Activated naive CD4-positive, alpha-beta T cell treated with anti-CD3 and anti-CD28 coated beads for 36 hours (primary cell): ENCODE measurements at regions of chr5 and their contacts with region 1.

Region 1: GRCh38 chr5:39148983-39149534 is 70.3 kb downstream of the FYB1 start:
- DNase-seq: no peak
- H3K4me3 Mint-ChIP-seq: no peak overlapping the region
- H3K27ac Mint-ChIP-seq: peak overlapping the region; percentile 65
- H3K4me1 Mint-ChIP-seq: peaks cover 78% of the 10 kb centered on the region
- H3K27me3 Mint-ChIP-seq: no peaks in the 10 kb centered on the region

Region 2: DNA sequence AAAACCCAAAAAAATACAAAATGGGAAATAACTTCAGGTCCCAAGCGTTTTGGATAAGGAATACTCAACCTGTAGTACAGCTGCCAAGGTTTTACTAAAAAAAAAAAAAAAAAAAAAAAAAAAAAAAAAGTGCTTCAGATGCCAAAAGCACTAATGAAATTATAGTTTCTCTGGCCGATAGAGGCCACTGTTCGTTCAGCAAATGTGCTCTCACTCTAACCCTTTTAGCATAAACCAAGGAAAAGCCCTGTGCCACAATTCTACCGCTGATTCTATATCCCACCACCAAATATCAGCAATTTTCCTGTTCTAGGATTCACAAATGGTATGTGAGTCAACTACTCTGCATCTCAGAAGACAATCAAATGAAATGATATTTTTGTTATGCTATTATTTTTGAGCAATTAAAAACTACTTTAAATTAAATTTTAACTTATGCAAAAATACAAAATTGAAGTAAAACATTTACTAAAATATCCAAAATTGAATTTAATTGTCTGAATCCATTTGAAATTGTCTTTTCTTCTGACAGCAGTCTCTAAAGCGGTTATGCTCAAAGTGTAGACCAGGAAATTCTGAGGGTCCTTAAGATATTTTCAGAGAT is 154.6 kb before region 1 on chr5:
- CTCF ChIA-PET with region 1: no interaction called
- intact Hi-C with region 1: loop called (anchors 1 kb)
- DNase-seq: peak; percentile 55
- H3K4me3 Mint-ChIP-seq: no peak overlapping the region
- H3K27ac Mint-ChIP-seq: no peak overlapping the region
- H3K4me1 Mint-ChIP-seq: peaks cover 14% of the 10 kb centered on the region
- H3K27me3 Mint-ChIP-seq: no peaks in the 10 kb centered on the region

Region 3: GRCh38 chr5:39131210-39132127 is 17.6 kb before region 1 on chr5:
- CTCF ChIA-PET with region 1: no interaction called
- intact Hi-C with region 1: no loop called
- DNase-seq: no peak
- H3K4me3 Mint-ChIP-seq: no peak overlapping the region
- H3K27ac Mint-ChIP-seq: peak overlapping the region; percentile 62
- H3K4me1 Mint-ChIP-seq: peaks cover 43% of the 10 kb centered on the region
- H3K27me3 Mint-ChIP-seq: no peaks in the 10 kb centered on the region

Region 4: DNA sequence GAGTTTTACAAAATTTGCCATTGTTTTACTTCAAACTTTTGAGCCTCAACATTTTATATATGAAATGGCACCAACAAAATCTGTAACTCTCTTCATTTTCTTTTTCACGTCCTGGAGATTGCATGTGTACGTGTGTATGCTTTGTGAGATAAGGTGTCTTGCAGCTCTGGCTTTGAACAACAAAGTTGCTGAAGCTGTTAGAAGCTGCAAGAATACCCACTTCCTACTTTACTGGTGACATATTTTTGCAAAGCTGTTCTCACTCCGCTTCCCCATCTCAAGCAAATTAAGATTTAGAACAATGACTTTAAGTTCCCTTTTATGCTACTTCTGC is 28.5 kb after region 1 on chr5:
- CTCF ChIA-PET with region 1: interaction called, 6 read pairs
- intact Hi-C with region 1: loop called (anchors 1 kb)
- DNase-seq: no peak
- H3K4me3 Mint-ChIP-seq: peak overlapping the region; percentile 75
- H3K27ac Mint-ChIP-seq: peak overlapping the region; percentile 92
- H3K4me1 Mint-ChIP-seq: peaks cover 95% of the 10 kb centered on the region
- H3K27me3 Mint-ChIP-seq: no peaks in the 10 kb centered on the region

Region 5: DNA sequence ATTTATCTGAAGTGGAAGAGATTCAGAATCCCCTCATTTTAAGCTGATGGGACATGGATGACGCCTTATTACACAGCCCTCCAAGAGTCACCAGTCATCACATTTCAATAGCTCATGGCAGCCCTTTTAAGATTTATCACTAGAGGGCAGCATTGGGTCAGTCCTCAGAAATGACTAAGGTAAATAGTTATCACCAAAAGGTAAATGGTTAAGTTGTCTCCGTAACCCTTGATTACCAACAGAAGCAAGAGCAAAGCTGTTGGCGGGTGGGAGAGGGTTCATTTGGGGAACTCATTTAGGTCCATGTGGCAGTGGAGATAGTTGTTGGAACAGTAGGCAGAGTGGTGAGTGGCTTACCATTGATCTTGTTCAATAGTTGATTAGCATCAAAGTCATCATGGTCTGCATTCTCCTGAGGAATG is 227.2 kb after region 1 on chr5:
- CTCF ChIA-PET with region 1: no interaction called
- intact Hi-C with region 1: loop called (anchors 5 kb)
- DNase-seq: peak; percentile 65
- H3K4me3 Mint-ChIP-seq: no peak overlapping the region
- H3K27ac Mint-ChIP-seq: no peak overlapping the region
- H3K4me1 Mint-ChIP-seq: no peaks in the 10 kb centered on the region
- H3K27me3 Mint-ChIP-seq: no peaks in the 10 kb centered on the region

Region 6: DNA sequence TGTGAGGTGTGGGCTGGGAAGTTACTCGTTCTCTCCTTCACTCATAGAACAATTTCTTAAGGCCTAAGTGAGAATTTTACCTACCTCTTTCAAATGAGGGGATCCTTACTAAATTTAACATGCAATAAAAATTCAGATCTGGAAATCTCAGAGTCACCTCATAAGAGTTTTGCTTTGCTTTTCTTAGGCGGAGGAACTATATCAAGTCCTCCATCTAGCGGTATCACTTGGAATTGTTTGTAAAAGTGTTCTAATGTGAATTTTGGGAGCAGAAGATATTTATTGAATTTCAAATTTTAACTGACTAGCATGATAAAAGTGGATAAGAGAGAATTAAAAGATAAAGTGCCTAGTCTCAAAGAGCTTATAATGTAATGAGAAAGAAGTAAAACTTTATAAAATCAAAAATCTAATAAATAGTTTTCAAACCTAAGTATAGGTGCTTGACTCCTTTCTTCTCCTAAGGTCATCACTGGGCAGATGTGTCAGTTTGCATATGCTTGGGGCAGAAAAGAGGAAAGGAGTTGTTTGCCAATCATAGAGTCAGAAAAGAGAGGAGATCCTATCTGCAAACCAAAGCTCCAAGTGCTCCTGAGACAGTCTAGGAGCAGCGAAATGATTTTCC is 421.5 kb after region 1 on chr5:
- CTCF ChIA-PET with region 1: no interaction called
- intact Hi-C with region 1: loop called (anchors 1 kb)
- DNase-seq: no peak
- H3K4me3 Mint-ChIP-seq: no peak overlapping the region
- H3K27ac Mint-ChIP-seq: no peak overlapping the region
- H3K4me1 Mint-ChIP-seq: no peaks in the 10 kb centered on the region
- H3K27me3 Mint-ChIP-seq: peaks cover 5% of the 10 kb centered on the region